ENCODE measurements at regions of chr12 and their contacts with region 1.

Region 1: GRCh38 chr12:91326058-91327027 is 143.7 kb upstream of the DCN start:
- DNase-seq: peak; percentile 80

Region 2: DNA sequence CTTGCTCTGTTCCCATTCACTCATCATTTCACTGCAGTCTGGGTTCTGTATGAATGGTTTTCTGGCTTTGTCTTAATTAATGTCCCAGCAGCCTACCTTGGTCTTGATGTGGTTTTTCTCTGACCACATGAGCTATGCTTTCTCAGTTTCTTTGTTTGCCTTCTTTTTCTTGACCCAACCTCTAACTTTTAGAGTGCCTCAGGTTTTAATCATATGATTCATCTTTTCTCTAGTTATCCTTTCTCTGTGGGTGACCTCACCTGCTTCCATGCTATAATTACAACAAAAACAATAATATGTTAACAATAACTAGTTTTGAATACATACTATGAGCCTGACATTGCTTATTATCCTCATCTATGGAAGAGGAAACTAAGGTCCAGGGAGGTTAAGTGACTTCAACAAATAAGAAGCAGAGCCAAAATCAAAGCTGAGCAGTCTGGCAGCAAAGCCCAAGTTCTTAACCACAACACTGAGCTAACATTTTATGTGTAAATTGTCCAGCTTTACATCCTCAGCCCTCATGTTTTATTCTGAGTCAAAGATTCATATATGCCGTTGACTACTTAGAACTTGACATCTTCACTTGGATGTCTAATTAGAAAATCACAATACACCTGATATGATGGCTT is 316.9 kb before region 1 on chr12:
- in situ Hi-C with region 1: loop called (anchors 25 kb)
- DNase-seq: no peak

Region 3: GRCh38 chr12:91172096-91172495 is 154.2 kb before region 1 on chr12:
- in situ Hi-C with region 1: no loop called
- DNase-seq: no peak